ENCODE measurements at regions of chr5 and their contacts with region 1.

Region 1: DNA sequence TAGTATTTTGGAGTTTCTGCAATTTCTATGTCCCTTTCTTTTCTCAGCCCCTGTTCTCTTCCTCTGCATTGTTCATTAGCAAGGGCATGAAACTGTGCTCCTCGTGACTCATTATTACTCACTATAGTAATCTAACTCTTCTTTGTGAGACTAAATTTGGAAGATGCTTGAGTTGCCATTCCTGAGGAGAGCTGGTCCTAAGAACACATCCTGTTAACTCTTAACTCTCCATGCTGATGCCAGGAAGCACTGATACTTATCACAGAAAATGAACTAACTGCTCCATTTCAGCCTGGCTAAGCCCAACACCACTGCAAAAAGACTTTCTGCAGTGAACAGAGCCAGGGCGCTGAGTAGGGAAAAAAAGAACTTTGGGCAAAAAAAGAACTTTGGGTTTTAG is 10.6 kb upstream of the CSNK1A1 start:
- DNase-seq: peak; percentile 94
- H3K4me3 ChIP-seq: peak overlapping the region; percentile 21
- H3K27ac ChIP-seq: peak overlapping the region; percentile 73
- H3K4me1 ChIP-seq: peaks cover 31% of the 10 kb centered on the region
- H3K27me3 ChIP-seq: no peaks in the 10 kb centered on the region
- CTCF ChIP-seq: no peak

Region 2: GRCh38 chr5:149317281-149318048 is 244.4 kb before region 1 on chr5:
- CTCF ChIA-PET with region 1: interaction called, 18 read pairs
- POLR2A ChIA-PET with region 1: no interaction called
- intact Hi-C with region 1: loop called (anchors 10 kb)
- DNase-seq: peak; percentile 65
- H3K4me3 ChIP-seq: no peak overlapping the region
- H3K27ac ChIP-seq: no peak overlapping the region
- H3K4me1 ChIP-seq: peaks cover 11% of the 10 kb centered on the region
- H3K27me3 ChIP-seq: no peaks in the 10 kb centered on the region
- CTCF ChIP-seq: peak; percentile 79

Region 3: DNA sequence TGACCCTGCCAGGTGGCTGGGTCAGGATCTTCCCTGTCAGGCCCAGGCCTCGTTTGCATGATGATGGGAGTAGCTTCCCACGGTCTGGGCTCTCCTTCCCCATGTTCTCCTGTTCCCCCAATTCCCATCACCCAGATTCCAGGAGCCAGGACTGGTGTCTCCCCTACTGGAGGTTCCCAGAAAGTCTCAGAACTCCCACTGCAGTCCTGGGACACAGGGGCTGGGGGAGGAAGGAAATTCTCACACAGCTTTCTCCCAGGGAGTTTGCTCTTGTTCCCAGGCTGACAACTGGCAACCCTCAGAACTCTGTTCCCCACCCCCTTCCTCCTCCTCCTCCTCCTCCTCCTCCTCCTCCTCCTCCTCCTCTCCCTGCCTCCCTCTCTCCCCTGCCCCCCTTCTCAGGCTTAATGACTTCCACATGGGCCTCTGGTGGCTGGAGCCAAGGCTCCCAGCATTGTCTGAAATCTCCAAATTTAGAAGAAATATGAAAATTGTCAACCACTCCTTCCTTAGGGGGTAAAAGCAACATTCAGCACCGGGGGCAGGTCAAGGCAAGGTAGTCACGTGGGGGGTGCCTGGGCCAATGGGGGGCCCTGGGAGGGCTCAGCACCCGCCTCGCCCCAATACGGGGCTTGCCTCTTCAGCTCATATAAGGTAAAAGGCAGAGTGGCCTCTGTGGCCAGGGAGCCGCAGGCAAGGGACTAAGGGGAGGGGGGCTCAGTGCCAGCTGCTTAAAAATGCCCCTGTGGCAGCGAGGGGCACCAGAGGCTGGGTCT is 155.5 kb before region 1 on chr5:
- CTCF ChIA-PET with region 1: no interaction called
- POLR2A ChIA-PET with region 1: interaction called, 17 read pairs
- intact Hi-C with region 1: no loop called
- DNase-seq: peak; percentile 42
- H3K4me3 ChIP-seq: no peak overlapping the region
- H3K27ac ChIP-seq: no peak overlapping the region
- H3K4me1 ChIP-seq: peaks cover 20% of the 10 kb centered on the region
- H3K27me3 ChIP-seq: no peaks in the 10 kb centered on the region
- CTCF ChIP-seq: no peak

Region 4: DNA sequence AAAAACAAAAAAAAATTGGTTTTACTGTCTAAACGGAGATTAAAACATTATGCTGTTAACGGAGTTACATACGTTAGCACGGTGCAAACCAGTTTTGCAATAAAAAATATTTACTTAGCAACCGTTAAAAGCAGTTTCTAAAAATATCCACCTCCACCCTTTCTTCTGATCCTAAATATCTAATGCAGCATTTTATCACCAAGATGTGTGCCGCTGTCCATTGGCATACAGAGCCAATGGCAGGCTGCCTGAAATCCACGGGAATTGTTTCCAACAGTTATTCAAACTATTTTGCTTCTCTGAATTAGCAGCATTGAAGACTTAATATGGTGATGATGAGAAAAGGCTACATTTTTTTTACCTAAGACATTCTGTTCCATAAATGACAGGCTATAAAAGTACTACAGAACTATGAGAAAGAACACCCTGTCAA is 72.2 kb before region 1 on chr5:
- CTCF ChIA-PET with region 1: no interaction called
- POLR2A ChIA-PET with region 1: no interaction called
- intact Hi-C with region 1: loop called (anchors 5 kb)
- DNase-seq: no peak
- H3K4me3 ChIP-seq: no peak overlapping the region
- H3K27ac ChIP-seq: no peak overlapping the region
- H3K4me1 ChIP-seq: peaks cover 11% of the 10 kb centered on the region
- H3K27me3 ChIP-seq: no peaks in the 10 kb centered on the region
- CTCF ChIP-seq: no peak

Region 5: DNA sequence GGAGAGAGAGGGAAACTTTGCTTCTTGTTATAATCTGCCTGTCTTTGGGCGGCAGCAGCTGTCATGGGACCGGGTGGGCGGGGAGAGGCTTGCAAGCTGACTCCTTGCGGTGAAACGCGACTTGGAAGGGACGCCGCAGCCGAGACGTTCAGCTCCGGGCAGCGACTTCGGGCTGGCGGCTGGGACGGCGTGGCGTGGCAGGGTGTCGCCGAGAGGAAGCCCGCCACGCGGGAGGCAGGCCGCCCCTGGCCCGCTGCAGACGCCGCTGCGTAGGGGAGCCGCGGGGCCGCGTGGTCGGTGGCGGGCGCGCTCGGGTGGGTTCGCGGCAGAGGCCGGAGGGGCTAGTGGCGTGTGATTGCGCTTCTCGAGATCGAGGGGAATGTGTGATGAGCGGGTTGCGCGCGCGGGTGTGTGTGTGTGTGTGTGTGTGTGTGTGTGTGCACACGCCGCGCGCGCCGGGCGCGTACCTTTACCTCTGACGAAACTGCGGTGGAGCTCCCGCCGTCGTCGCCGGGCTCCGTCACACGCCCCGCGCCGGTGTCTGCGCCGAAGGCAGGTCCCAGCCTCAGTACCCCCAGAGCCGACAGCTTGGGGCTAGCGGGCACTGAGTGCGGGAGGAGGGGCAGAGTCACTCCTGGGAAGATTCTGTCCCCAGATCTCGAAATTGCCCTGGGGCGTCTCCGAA is 169.9 kb after region 1 on chr5:
- CTCF ChIA-PET with region 1: interaction called, 14 read pairs
- POLR2A ChIA-PET with region 1: interaction called, 13 read pairs
- intact Hi-C with region 1: no loop called
- DNase-seq: peak; percentile 93
- H3K4me3 ChIP-seq: peak overlapping the region; percentile 93
- H3K27ac ChIP-seq: peak overlapping the region; percentile 45
- H3K4me1 ChIP-seq: peaks cover 2% of the 10 kb centered on the region
- H3K27me3 ChIP-seq: no peaks in the 10 kb centered on the region
- CTCF ChIP-seq: no peak